ENCODE measurements at regions of chr9 and their contacts with region 1.

Region 1: DNA sequence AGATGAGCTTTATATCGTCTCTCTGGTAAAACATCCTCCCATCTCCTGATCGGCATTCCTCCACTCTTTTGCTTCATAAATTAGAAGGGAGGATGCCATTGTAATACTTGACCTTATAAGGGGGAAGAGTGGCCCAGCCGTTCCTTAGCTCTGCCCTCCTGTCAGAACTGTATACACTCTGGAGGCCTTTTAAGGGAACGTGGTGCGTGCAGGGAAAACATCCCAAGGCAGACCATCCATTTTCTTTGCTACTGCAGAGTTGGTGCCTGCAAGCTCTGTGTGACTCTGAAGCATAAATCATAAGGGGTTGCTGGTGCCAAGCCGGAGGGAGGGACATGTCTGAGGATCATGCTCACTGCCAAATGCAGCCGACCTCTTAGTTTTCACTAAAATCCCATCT is 90.4 kb downstream of the PGM5 start:
- DNase-seq: peak in 2 of 3 donors; percentile 27 to 29
- ATAC-seq: peak; percentile 52
- H3K4me3 ChIP-seq: no peak overlapping the region
- H3K4me1 ChIP-seq: peaks cover 2% of the 10 kb centered on the region
- CTCF ChIP-seq: no peak

Region 2: DNA sequence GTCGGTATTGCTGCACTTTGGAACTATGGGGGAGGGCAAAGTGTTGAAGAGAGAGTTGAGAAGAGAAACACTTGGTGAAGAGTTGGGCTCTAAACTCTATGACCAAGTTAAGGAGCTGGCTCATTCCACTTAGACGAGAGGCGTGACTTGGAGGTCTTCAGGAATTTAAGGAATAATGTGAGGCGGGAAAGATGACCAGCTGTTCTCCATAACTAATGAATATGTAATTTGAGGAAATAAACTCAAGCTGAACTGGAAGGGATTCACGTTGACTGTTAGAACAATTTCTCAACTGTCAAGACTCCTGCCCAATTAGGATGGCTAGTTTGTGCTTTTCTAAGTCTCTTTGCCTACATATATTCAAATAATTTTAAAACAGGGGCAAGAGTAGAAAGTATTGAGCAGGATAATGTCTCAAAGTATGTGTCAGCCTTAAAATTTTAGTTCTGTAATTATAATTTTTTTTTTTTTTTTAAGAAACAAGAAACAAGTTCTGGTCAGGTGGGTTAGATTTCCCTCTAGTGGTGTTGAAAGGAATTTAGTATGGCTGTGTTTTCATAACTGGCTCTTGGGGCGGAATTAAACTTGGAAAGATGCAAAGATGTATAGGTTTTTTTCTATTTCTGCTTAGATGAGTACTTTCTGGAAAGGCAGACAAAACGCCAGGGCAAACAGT is 60.4 kb after region 1 on chr9:
- intact Hi-C with region 1: loop called in 1 of 2 experiments (anchors 10 kb)
- DNase-seq: no peak
- ATAC-seq: no peak
- H3K4me3 ChIP-seq: no peak overlapping the region
- H3K4me1 ChIP-seq: peaks cover 8% of the 10 kb centered on the region
- CTCF ChIP-seq: peak; percentile 49

Region 3: DNA sequence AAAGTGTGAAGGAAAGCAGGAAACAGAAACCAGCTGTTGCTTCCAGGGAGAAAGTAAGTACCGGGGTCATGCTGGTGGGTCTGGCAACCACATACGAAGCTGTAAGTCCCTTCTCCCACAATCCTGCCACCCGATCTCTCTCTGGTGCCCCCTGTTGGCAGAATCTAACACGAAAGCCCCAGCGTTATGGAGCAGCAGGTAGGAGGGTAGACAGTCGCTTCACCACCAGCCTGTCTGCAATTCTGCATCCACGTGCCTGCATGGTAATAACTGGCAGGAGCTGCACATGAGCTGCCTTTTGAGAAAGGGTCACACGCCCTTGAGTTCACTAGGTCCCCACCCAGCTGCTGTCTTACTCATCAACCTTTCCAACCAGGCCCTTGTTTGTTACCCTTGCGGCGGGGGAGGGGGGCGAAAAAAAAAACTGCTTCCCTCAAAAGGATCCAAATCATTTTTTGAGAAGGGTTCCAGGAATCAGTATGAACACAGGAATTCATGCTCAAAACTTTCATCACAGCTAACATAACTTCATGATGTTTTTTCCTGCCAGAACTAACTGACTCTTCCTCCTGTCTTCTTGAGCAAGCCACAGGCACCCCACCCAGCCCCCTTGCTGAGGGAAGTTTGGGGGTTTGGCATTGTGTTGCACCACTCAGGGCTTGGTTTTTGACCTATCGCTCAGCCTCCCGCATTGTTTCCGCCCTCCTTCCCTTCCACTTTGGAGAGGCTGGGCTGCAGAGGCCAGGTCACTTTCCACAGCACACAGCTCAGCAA is 113.4 kb after region 1 on chr9:
- intact Hi-C with region 1: no loop called
- DNase-seq: peak; percentile 54 to 78 (median 68)
- ATAC-seq: peak; percentile 77
- H3K4me3 ChIP-seq: no peak overlapping the region
- H3K4me1 ChIP-seq: no peaks in the 10 kb centered on the region
- CTCF ChIP-seq: peak; percentile 24

Region 4: GRCh38 chr9:68619636-68620035 is 172.8 kb after region 1 on chr9:
- intact Hi-C with region 1: no loop called
- DNase-seq: no peak
- ATAC-seq: peak; percentile 50
- H3K4me3 ChIP-seq: no peak overlapping the region
- H3K4me1 ChIP-seq: no peaks in the 10 kb centered on the region
- CTCF ChIP-seq: no peak

Region 5: GRCh38 chr9:68925175-68925574 is 478.3 kb after region 1 on chr9:
- intact Hi-C with region 1: no loop called
- DNase-seq: no peak
- ATAC-seq: no peak
- H3K4me3 ChIP-seq: no peak overlapping the region
- H3K4me1 ChIP-seq: no peaks in the 10 kb centered on the region
- CTCF ChIP-seq: no peak

Measured in mucosa of descending colon (tissue), 3 donors.